MCF 10A (cell line): ENCODE measurements at regions of chr16 and their contacts with region 1.

Region 1: DNA sequence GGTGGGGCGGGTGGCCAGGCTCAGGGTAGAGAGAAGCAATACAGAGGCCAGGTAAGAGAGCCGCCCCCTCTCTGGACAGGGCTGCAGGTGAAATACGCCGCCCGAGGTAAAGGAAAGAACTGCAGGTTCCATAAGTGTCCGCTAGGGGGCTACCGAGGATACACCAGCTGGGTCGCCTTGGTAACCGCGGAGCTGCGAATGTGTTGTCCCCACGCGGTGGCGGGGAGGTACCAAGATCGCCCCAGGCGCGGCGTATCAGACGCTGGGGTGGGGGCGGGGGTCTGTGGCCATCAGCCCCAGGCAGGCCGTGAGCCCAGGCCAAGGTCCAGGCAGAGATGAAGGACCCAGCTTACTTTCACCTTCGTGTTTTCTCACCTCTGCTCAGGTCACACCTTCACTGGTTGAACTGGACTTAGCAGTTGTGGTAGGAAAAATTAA is 18.4 kb upstream of the ZFP90 start:
- DNase-seq: peak; percentile 81
- H3K4me3 Mint-ChIP-seq: peak overlapping the region; percentile 57
- H3K27ac Mint-ChIP-seq: peak overlapping the region; percentile 70
- H3K4me1 Mint-ChIP-seq: peaks cover 6% of the 10 kb centered on the region
- H3K27me3 Mint-ChIP-seq: no peaks in the 10 kb centered on the region
- CTCF ChIP-seq: peak; percentile 97

Region 2: GRCh38 chr16:68028996-68029395 is 491.7 kb before region 1 on chr16:
- CTCF ChIA-PET with region 1: no interaction called
- POLR2A ChIA-PET with region 1: no interaction called
- intact Hi-C with region 1: no loop called
- DNase-seq: no peak
- H3K4me3 Mint-ChIP-seq: no peak overlapping the region
- H3K27ac Mint-ChIP-seq: no peak overlapping the region
- H3K4me1 Mint-ChIP-seq: peaks cover 27% of the 10 kb centered on the region
- H3K27me3 Mint-ChIP-seq: no peaks in the 10 kb centered on the region
- CTCF ChIP-seq: no peak

Region 3: DNA sequence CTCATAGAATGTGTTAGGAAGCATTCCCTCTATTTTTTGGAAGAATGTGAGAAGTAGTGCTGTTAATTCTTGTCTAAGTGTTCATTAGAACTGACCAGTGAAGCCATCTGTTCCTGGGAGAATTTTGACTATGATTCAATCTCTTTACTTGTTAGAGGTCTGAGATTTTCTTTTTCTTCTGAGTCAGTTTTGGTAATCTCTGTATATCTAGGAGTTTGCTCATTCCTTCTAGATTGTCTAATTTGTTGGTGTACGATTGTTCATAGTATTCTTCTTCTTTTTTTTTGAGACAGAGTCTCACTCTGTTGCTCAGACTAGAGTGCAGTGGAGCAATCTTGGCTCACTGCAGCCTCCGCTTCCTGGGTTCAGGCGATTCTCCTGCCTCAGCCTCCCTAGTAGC is 415.1 kb before region 1 on chr16:
- CTCF ChIA-PET with region 1: no interaction called
- POLR2A ChIA-PET with region 1: no interaction called
- intact Hi-C with region 1: no loop called
- DNase-seq: no peak
- H3K4me3 Mint-ChIP-seq: no peak overlapping the region
- H3K27ac Mint-ChIP-seq: no peak overlapping the region
- H3K4me1 Mint-ChIP-seq: peaks cover 9% of the 10 kb centered on the region
- H3K27me3 Mint-ChIP-seq: no peaks in the 10 kb centered on the region
- CTCF ChIP-seq: no peak

Region 4: GRCh38 chr16:68128577-68129305 is 391.9 kb before region 1 on chr16:
- CTCF ChIA-PET with region 1: no interaction called
- POLR2A ChIA-PET with region 1: no interaction called
- intact Hi-C with region 1: no loop called
- DNase-seq: peak; percentile 51
- H3K4me3 Mint-ChIP-seq: no peak overlapping the region
- H3K27ac Mint-ChIP-seq: peak overlapping the region; percentile 82
- H3K4me1 Mint-ChIP-seq: peaks cover 25% of the 10 kb centered on the region
- H3K27me3 Mint-ChIP-seq: no peaks in the 10 kb centered on the region
- CTCF ChIP-seq: no peak

Region 5: GRCh38 chr16:68364561-68364998 is 156.1 kb before region 1 on chr16:
- CTCF ChIA-PET with region 1: interaction called, 12 read pairs
- POLR2A ChIA-PET with region 1: no interaction called
- intact Hi-C with region 1: no loop called
- DNase-seq: no peak
- H3K4me3 Mint-ChIP-seq: no peak overlapping the region
- H3K27ac Mint-ChIP-seq: no peak overlapping the region
- H3K4me1 Mint-ChIP-seq: peaks cover 5% of the 10 kb centered on the region
- H3K27me3 Mint-ChIP-seq: peaks cover 15% of the 10 kb centered on the region
- CTCF ChIP-seq: no peak

Region 6: DNA sequence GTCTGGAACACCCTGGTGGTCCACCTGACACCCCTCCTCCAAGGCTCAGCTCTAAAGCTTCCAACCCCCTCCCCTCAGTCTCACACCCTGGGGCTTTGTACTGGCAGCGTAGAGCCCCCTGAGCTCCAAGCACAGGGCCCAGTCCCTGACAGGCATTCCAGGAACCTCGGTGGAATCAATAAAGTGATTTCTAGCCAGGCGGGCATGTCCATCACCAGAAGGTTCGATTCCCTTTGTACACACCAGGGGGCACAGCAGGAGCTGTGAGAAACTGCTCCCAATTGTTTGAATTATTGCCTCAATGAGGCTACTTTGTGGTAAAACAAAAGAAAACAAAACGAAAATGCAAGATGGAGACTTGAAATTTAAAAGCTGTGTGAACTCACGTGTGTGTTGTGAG is 124.2 kb before region 1 on chr16:
- CTCF ChIA-PET with region 1: interaction called, 32 read pairs
- POLR2A ChIA-PET with region 1: no interaction called
- intact Hi-C with region 1: no loop called
- DNase-seq: peak; percentile 63
- H3K4me3 Mint-ChIP-seq: no peak overlapping the region
- H3K27ac Mint-ChIP-seq: no peak overlapping the region
- H3K4me1 Mint-ChIP-seq: no peaks in the 10 kb centered on the region
- H3K27me3 Mint-ChIP-seq: peaks cover 21% of the 10 kb centered on the region
- CTCF ChIP-seq: peak; percentile 59

Region 7: DNA sequence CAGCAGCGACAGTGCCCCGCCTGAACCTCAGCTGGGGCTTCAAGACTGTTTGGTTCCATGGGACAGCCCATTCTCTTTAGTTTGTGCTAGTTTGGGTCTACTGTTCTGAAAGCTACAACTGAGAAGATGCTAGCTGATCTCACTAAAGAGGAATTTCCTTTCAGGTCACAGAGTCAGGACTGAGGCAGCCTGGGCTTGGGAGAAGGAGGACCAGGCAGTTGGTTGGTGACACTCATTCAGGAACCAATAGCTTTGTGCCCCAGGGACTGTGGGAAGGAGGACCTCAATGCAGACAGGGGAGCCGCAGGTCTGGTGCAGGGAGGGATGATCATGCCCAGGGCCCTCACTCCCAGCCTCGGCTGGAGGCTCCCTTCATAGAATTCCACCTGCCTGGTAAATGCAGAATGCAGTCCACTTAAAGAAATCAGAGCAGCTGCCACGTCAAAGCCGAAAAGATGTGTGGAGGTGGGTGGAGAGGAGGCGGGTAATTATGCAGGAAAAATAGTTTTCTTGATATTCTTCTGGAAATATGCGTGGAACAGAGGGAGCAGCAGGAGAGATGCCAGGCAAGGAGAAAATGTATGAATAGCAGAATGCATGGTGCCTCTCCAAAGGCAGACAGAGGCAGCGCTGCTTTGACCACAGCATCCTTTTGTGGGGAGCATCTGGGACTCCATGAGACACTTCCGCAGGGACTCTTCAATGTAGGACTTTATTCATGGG is 14.2 kb before region 1 on chr16:
- CTCF ChIA-PET with region 1: interaction called, 21 read pairs
- POLR2A ChIA-PET with region 1: no interaction called
- intact Hi-C with region 1: no loop called
- DNase-seq: no peak
- H3K4me3 Mint-ChIP-seq: no peak overlapping the region
- H3K27ac Mint-ChIP-seq: no peak overlapping the region
- H3K4me1 Mint-ChIP-seq: no peaks in the 10 kb centered on the region
- H3K27me3 Mint-ChIP-seq: peaks cover 45% of the 10 kb centered on the region
- CTCF ChIP-seq: no peak

Region 8: GRCh38 chr16:68533937-68534336 is 13.3 kb after region 1 on chr16:
- CTCF ChIA-PET with region 1: interaction called, 11 read pairs
- POLR2A ChIA-PET with region 1: interaction called, 12 read pairs
- intact Hi-C with region 1: no loop called
- DNase-seq: no peak
- H3K4me3 Mint-ChIP-seq: no peak overlapping the region
- H3K27ac Mint-ChIP-seq: no peak overlapping the region
- H3K4me1 Mint-ChIP-seq: peaks cover 3% of the 10 kb centered on the region
- H3K27me3 Mint-ChIP-seq: no peaks in the 10 kb centered on the region
- CTCF ChIP-seq: no peak

Region 9: GRCh38 chr16:68538880-68539701 is 18.4 kb after region 1 on chr16 and contains the start of gene ZFP90:
- CTCF ChIA-PET with region 1: interaction called, 11 read pairs
- POLR2A ChIA-PET with region 1: no interaction called
- intact Hi-C with region 1: no loop called
- DNase-seq: peak; percentile 76
- H3K4me3 Mint-ChIP-seq: peak within 1 kb of the TSS; percentile 86
- H3K27ac Mint-ChIP-seq: peak within 1 kb of the TSS; percentile 81
- H3K4me1 Mint-ChIP-seq: peaks cover 10% of the 10 kb centered on the region
- H3K27me3 Mint-ChIP-seq: no peaks in the 10 kb centered on the region
- CTCF ChIP-seq: no peak
- total RNA-seq, gene ZFP90: 25.5 and 29.3 TPM in 2 replicates

Region 10: GRCh38 chr16:68553186-68553585 is 32.5 kb after region 1 on chr16:
- CTCF ChIA-PET with region 1: no interaction called
- POLR2A ChIA-PET with region 1: no interaction called
- intact Hi-C with region 1: no loop called
- DNase-seq: no peak
- H3K4me3 Mint-ChIP-seq: no peak overlapping the region
- H3K27ac Mint-ChIP-seq: no peak overlapping the region
- H3K4me1 Mint-ChIP-seq: no peaks in the 10 kb centered on the region
- H3K27me3 Mint-ChIP-seq: no peaks in the 10 kb centered on the region
- CTCF ChIP-seq: no peak